Mammary epithelial cell (primary cell): ENCODE measurements at regions of chr17 and their contacts with region 1.

Region 1: DNA sequence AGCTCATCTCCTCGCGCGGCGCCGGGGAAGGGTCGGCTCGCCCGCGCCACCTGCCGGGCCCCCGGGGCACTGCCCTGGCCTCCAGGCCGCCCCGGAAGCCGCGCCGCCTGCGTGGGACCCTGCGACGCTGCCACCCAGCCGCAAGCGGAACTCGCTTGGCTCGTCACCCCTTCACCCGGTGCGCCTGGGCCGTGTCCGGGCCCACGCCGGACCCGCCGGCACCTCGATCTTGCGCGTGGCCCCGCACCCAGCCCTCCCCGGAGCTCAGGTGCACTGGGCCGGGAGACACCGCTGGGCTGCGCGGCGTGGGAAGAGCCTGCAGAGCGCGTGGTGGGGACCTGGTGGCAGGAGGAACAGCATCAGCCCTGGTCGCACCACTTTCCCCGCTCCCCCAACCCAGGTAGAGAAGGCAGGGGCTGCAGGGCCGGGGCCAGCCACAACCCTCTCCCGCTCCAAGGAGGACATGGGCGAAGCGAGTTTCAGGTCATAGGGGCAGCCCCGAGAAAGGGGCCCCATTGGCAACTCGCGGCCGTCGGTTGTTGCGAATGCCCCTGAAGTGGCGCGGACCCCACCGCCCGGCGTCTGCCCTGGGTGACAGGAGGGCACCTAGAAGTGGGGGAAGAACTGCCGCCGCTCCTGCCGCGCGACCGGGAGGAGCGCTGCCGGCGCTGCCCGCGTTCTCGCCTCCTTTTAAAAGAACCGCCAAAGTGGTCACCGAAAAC is 363 bp upstream of the MIF4GD start:
- DNase-seq: peak; percentile 60
- H3K4me3 ChIP-seq: peak overlapping the region; percentile 59 to 76 (median 70)
- H3K27ac ChIP-seq: no peak overlapping the region
- H3K4me1 ChIP-seq: peaks cover 20% of the 10 kb centered on the region
- H3K27me3 ChIP-seq: no peaks in the 10 kb centered on the region
- CTCF ChIP-seq: peak; percentile 53 to 69

Region 2: GRCh38 chr17:75218131-75218530 is 53.3 kb before region 1 on chr17:
- CTCF ChIA-PET with region 1: no interaction called
- dilution Hi-C with region 1: no loop called
- in situ Hi-C with region 1: no loop called
- intact Hi-C with region 1: no loop called
- DNase-seq: no peak
- H3K4me3 ChIP-seq: no peak overlapping the region
- H3K27ac ChIP-seq: no peak overlapping the region
- H3K4me1 ChIP-seq: no peaks in the 10 kb centered on the region
- H3K27me3 ChIP-seq: no peaks in the 10 kb centered on the region
- CTCF ChIP-seq: no peak

Region 3: GRCh38 chr17:75289115-75289831 is 17.9 kb after region 1 on chr17 and contains the start of gene SLC25A19:
- CTCF ChIA-PET with region 1: interaction called, 20 read pairs
- dilution Hi-C with region 1: no loop called
- in situ Hi-C with region 1: no loop called
- intact Hi-C with region 1: loop called (anchors 1 kb)
- DNase-seq: peak; percentile 99
- H3K4me3 ChIP-seq: peak within 1 kb of the TSS; percentile 80 to 99 (median 92)
- H3K27ac ChIP-seq: peak within 1 kb of the TSS; percentile 85
- H3K4me1 ChIP-seq: peaks cover 9% of the 10 kb centered on the region
- H3K27me3 ChIP-seq: no peaks in the 10 kb centered on the region
- CTCF ChIP-seq: no peak
- total RNA-seq, gene SLC25A19: 4.5 to 12.1 TPM

Region 4: GRCh38 chr17:75405365-75406221 is 134.2 kb after region 1 on chr17 and contains the start of gene GRB2:
- CTCF ChIA-PET with region 1: interaction called, 9 read pairs
- dilution Hi-C with region 1: no loop called
- in situ Hi-C with region 1: no loop called
- intact Hi-C with region 1: loop called (anchors 2 kb)
- DNase-seq: peak; percentile 93
- H3K4me3 ChIP-seq: peak within 1 kb of the TSS; percentile 82 to 93 (median 90)
- H3K27ac ChIP-seq: peak within 1 kb of the TSS; percentile 63
- H3K4me1 ChIP-seq: peaks cover 13% of the 10 kb centered on the region
- H3K27me3 ChIP-seq: no peaks in the 10 kb centered on the region
- CTCF ChIP-seq: no peak
- total RNA-seq, gene GRB2: 61.5 to 78.6 TPM

Region 5: GRCh38 chr17:75412455-75413317 is 141.3 kb after region 1 on chr17:
- CTCF ChIA-PET with region 1: interaction called, 5 read pairs
- dilution Hi-C with region 1: no loop called
- in situ Hi-C with region 1: no loop called
- intact Hi-C with region 1: loop called (anchors 1 kb)
- DNase-seq: peak; percentile 62
- H3K4me3 ChIP-seq: no peak overlapping the region
- H3K27ac ChIP-seq: no peak overlapping the region
- H3K4me1 ChIP-seq: peaks cover 3% of the 10 kb centered on the region
- H3K27me3 ChIP-seq: no peaks in the 10 kb centered on the region
- CTCF ChIP-seq: peak; percentile 69 to 75